Motor neuron (in vitro differentiated cells): ENCODE measurements at regions of chr14 and their contacts with region 1.

Region 1: GRCh38 chr14:103808403-103809001 is 38.9 kb downstream of the PPP1R13B start:
- ATAC-seq: peak in 7 of 8 experiments; percentile 55 to 98 (median 73)
- H3K4me3 ChIP-seq: no peak overlapping the region
- H3K27ac ChIP-seq: no peak overlapping the region
- H3K4me1 ChIP-seq: no peaks in the 10 kb centered on the region

Region 2: DNA sequence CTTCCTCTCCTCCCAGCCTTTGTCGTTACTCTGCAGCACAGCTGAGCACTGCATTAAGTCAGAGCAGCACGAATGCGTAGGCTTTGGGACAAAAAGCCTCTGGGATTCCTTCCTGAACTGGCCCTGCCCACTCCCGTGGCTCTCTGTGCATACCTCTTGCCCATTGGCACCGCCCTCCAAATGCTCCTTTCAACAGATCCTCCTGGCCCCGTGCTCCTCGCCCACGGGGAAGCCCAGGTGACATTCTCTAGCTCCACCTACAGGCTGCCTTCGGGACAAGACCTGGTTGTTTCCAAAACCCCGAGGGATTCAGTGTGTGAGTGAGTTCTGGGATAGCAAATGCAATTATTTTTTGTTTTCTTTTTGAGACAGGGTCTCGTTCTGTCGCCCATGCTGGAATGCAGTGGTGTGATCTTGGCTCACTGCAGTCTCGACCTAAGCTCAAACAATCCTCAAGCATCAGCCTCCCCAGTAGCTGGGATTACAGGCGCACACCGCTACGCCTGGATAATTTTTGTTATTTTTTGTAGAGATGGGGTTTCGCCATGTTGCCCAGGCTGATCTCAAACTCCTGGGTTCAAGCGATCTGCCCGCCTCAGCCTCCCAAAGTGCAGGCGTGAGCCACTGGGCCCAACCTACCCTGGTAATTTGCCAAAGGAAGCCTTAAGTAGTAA is 101.9 kb after region 1 on chr14:
- in situ Hi-C with region 1: loop called in 1 of 9 experiments (anchors 10 kb)
- ATAC-seq: peak; percentile 96 to 100 (median 99)
- H3K4me3 ChIP-seq: no peak overlapping the region
- H3K27ac ChIP-seq: no peak overlapping the region
- H3K4me1 ChIP-seq: peaks cover 5 to 6% of the 10 kb centered on the region in 2 donors

Region 3: DNA sequence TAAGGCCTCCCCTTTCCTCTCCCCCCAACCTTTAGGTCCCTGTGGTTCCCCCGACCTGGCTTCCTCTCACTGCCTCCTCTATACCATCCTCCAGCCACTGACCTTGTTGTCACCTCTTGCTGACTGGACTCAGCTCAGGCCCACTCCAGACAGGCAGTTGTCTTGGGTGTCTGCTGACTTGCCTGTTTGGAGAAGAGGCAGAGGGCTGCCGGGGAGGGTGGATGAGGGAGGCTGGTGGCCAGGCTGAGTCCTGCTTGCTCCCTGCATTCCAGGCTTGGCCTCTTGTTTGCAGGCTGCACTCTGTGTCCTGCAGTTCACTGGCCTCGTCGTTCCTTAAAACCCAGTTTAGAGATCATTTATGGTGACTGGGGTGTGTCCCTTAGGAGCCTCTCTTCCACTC is 164.9 kb after region 1 on chr14:
- in situ Hi-C with region 1: loop called in 2 of 9 experiments (anchors 10 to 25 kb)
- ATAC-seq: no peak
- H3K4me3 ChIP-seq: no peak overlapping the region
- H3K27ac ChIP-seq: no peak overlapping the region
- H3K4me1 ChIP-seq: no peaks in the 10 kb centered on the region

Region 4: DNA sequence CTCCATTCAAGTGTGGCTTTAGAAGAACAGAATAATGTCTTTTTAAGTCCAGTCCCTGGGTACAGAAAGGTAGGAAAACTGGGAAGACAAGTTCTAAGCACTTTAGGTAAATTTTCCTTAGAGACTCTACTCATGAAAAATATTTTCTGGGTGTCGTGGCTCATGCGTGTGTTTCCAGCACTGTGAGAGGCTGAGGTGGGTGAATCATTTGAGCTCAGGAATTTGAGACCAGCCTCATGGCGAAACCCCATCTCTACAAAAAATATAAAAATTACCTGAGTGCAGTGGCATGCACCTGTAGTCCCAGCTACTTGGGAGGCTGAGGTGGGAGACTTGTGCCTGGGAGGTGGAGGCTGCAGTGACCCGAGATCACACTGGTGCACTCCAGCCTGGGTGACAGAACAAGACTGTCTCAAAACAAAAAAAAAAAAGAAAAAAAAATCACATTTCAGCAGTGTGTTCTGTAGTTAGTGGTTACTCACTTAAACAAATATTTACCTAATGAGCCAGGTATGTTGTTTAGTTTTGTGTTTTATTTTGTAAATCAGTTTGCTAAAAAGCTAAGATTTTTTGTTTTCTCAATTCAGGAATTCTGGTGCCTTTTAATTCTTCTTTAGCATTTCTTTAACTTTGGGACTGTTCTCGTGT is 186.2 kb after region 1 on chr14:
- in situ Hi-C with region 1: loop called in 1 of 9 experiments (anchors 25 kb)
- ATAC-seq: no peak
- H3K4me3 ChIP-seq: no peak overlapping the region
- H3K27ac ChIP-seq: no peak overlapping the region
- H3K4me1 ChIP-seq: no peaks in the 10 kb centered on the region

Region 5: GRCh38 chr14:104108216-104108569 is 299.7 kb after region 1 on chr14:
- in situ Hi-C with region 1: no loop called
- ATAC-seq: peak in 5 of 8 experiments; percentile 38 to 70 (median 62)
- H3K4me3 ChIP-seq: no peak overlapping the region
- H3K27ac ChIP-seq: no peak overlapping the region
- H3K4me1 ChIP-seq: peaks cover 19 to 28% of the 10 kb centered on the region in 2 donors